GM12878 (cell line): ENCODE measurements at regions of chr17 and their contacts with region 1.

Region 1: GRCh38 chr17:12667299-12667958 is 1.7 kb downstream of the MYOCD start:
- DNase-seq: no peak
- ATAC-seq: peak; percentile 67
- H3K4me3 ChIP-seq: no peak overlapping the region
- H3K27ac ChIP-seq: no peak overlapping the region
- H3K4me1 ChIP-seq: no peaks in the 10 kb centered on the region
- H3K27me3 ChIP-seq: peaks cover 5% of the 10 kb centered on the region in 2 experiments; a peak in 3 of 4 replicates
- CTCF ChIP-seq: peak; percentile 32 to 63 (median 42); a peak in 5 of 6 replicates
- EP300 ChIP-seq: no peak
- POLR2A ChIP-seq: no peak
- RAD21 ChIP-seq: peak; percentile 73

Region 2: DNA sequence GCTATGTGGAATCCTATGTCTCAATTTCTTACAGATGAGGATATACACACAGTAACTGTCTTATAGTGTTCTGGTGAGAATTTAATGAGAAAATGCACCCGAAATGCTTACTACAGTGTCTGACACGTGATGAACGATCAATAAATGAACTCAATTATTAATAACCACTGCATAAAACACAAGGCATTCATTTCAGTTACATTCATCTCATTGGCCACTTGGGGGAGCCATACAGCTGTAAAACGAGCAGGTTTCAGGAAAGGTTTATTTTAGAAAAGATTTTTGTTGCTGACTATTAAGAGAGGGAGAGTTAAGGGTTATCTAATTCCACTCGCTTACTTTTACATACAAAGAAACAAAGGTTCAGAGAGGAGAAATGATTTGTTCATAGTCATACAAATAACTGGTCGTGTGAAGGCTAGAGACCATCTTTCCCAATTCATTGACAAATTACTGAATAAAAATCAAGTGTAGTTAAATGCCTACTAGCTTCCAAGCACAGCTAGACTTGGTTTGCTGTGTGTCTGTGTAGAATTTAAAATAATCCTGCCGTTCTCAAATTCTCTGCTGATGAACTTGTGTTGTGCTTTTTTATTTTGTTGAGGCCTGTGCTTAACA is 486.7 kb before region 1 on chr17:
- CTCF ChIA-PET with region 1: interaction called, 6 read pairs
- POLR2A ChIA-PET with region 1: no interaction called
- RAD21 ChIA-PET with region 1: no interaction called
- SMC1A ChIA-PET with region 1: interaction called, 3 read pairs
- in situ Hi-C with region 1: no loop called
- intact Hi-C with region 1: loop called (anchors 2 kb)
- DNase-seq: peak; percentile 0
- ATAC-seq: peak; percentile 68
- H3K4me3 ChIP-seq: no peak overlapping the region
- H3K27ac ChIP-seq: no peak overlapping the region
- H3K4me1 ChIP-seq: no peaks in the 10 kb centered on the region
- H3K27me3 ChIP-seq: no peaks in the 10 kb centered on the region
- CTCF ChIP-seq: peak; percentile 58 to 81 (median 74); a peak in 5 of 6 replicates
- EP300 ChIP-seq: no peak
- POLR2A ChIP-seq: no peak
- RAD21 ChIP-seq: peak; percentile 88

Region 3: GRCh38 chr17:12256380-12256995 is 410.9 kb before region 1 on chr17:
- CTCF ChIA-PET with region 1: interaction called, 21 read pairs
- POLR2A ChIA-PET with region 1: no interaction called
- RAD21 ChIA-PET with region 1: interaction called, 15 read pairs
- SMC1A ChIA-PET with region 1: interaction called, 13 read pairs
- in situ Hi-C with region 1: loop called (anchors 5 kb)
- intact Hi-C with region 1: loop called (anchors 1 kb)
- DNase-seq: peak; percentile 3
- ATAC-seq: peak; percentile 76
- H3K4me3 ChIP-seq: no peak overlapping the region
- H3K27ac ChIP-seq: no peak overlapping the region
- H3K4me1 ChIP-seq: no peaks in the 10 kb centered on the region
- H3K27me3 ChIP-seq: no peaks in the 10 kb centered on the region
- CTCF ChIP-seq: peak; percentile 62 to 75 (median 69)
- EP300 ChIP-seq: no peak
- POLR2A ChIP-seq: no peak
- RAD21 ChIP-seq: peak; percentile 82

Region 4: GRCh38 chr17:12395733-12396354 is 271.6 kb before region 1 on chr17:
- CTCF ChIA-PET with region 1: interaction called, 4 read pairs
- POLR2A ChIA-PET with region 1: no interaction called
- RAD21 ChIA-PET with region 1: interaction called, 3 read pairs
- SMC1A ChIA-PET with region 1: no interaction called
- in situ Hi-C with region 1: no loop called
- intact Hi-C with region 1: loop called (anchors 10 kb)
- DNase-seq: no peak
- ATAC-seq: peak; percentile 63
- H3K4me3 ChIP-seq: no peak overlapping the region
- H3K27ac ChIP-seq: no peak overlapping the region
- H3K4me1 ChIP-seq: no peaks in the 10 kb centered on the region
- H3K27me3 ChIP-seq: no peaks in the 10 kb centered on the region
- CTCF ChIP-seq: peak; percentile 47 to 63 (median 60)
- EP300 ChIP-seq: no peak
- POLR2A ChIP-seq: no peak
- RAD21 ChIP-seq: peak; percentile 48; the same call in 1 of the 2 replicates

Region 5: DNA sequence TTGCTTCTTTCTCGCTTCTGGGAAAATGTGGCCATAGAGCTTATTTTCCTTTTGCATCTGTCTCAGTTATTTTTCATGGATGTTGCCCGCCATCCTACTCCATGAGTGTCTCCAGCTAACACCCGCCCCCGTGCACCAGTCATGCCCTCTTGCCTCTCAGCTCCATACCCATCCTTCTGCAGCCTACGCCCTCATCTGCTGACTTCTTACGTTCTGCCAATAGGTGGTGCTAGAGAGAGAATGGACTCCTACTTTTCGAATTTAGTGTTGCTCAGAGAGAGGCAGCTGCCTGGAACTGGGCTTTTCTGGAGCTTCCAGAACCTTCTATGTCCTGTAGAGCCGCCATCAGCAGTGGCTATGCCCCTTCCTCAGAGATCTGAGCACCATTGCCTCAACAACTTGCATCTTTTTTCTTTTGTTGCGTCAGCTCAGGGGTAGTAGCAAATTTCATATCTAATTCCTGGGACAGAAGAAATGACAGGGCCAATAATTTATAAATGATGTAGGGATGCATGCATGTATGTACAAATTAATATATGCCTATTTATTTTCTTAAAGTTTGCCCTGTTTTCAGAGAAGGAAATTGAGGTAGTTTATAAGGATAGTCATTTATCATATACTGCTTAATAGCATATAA is 121.4 kb before region 1 on chr17:
- CTCF ChIA-PET with region 1: interaction called, 9 read pairs
- POLR2A ChIA-PET with region 1: no interaction called
- RAD21 ChIA-PET with region 1: interaction called, 3 read pairs
- SMC1A ChIA-PET with region 1: interaction called, 5 read pairs
- in situ Hi-C with region 1: no loop called
- intact Hi-C with region 1: loop called (anchors 2 kb)
- DNase-seq: no peak
- ATAC-seq: peak; percentile 84
- H3K4me3 ChIP-seq: no peak overlapping the region
- H3K27ac ChIP-seq: no peak overlapping the region
- H3K4me1 ChIP-seq: no peaks in the 10 kb centered on the region
- H3K27me3 ChIP-seq: no peaks in the 10 kb centered on the region
- CTCF ChIP-seq: peak; percentile 63 to 71 (median 70)
- EP300 ChIP-seq: no peak
- POLR2A ChIP-seq: no peak
- RAD21 ChIP-seq: peak; percentile 62

Region 6: GRCh38 chr17:12646761-12647422 is 20.5 kb before region 1 on chr17:
- CTCF ChIA-PET with region 1: no interaction called
- POLR2A ChIA-PET with region 1: no interaction called
- RAD21 ChIA-PET with region 1: no interaction called
- SMC1A ChIA-PET with region 1: no interaction called
- in situ Hi-C with region 1: no loop called
- intact Hi-C with region 1: no loop called
- DNase-seq: no peak
- ATAC-seq: no peak
- H3K4me3 ChIP-seq: no peak overlapping the region
- H3K27ac ChIP-seq: no peak overlapping the region
- H3K4me1 ChIP-seq: no peaks in the 10 kb centered on the region
- H3K27me3 ChIP-seq: no peaks in the 10 kb centered on the region; a peak in 1 of 4 replicates
- CTCF ChIP-seq: no peak
- EP300 ChIP-seq: no peak
- POLR2A ChIP-seq: no peak
- RAD21 ChIP-seq: no peak

Region 7: GRCh38 chr17:12744298-12744697 is 76.9 kb after region 1 on chr17:
- CTCF ChIA-PET with region 1: interaction called, 6 read pairs
- POLR2A ChIA-PET with region 1: no interaction called
- RAD21 ChIA-PET with region 1: no interaction called
- SMC1A ChIA-PET with region 1: no interaction called
- in situ Hi-C with region 1: no loop called
- intact Hi-C with region 1: loop called (anchors 10 kb)
- DNase-seq: no peak
- ATAC-seq: no peak
- H3K4me3 ChIP-seq: no peak overlapping the region
- H3K27ac ChIP-seq: no peak overlapping the region
- H3K4me1 ChIP-seq: no peaks in the 10 kb centered on the region
- H3K27me3 ChIP-seq: no peaks in the 10 kb centered on the region
- CTCF ChIP-seq: no peak
- EP300 ChIP-seq: no peak
- POLR2A ChIP-seq: no peak
- RAD21 ChIP-seq: no peak